ENCODE measurements at regions of chr6 and their contacts with region 1.

Region 1: GRCh38 chr6:90296346-90297114 is at the start of gene BACH2:
- DNase-seq: peak; percentile 74
- total RNA-seq, gene BACH2: 2.2 and 8.1 TPM in 2 replicates

Region 2: GRCh38 chr6:89984926-89985750 is 311.4 kb before region 1 on chr6:
- in situ Hi-C with region 1: loop called (anchors 25 kb)
- DNase-seq: no peak

Region 3: DNA sequence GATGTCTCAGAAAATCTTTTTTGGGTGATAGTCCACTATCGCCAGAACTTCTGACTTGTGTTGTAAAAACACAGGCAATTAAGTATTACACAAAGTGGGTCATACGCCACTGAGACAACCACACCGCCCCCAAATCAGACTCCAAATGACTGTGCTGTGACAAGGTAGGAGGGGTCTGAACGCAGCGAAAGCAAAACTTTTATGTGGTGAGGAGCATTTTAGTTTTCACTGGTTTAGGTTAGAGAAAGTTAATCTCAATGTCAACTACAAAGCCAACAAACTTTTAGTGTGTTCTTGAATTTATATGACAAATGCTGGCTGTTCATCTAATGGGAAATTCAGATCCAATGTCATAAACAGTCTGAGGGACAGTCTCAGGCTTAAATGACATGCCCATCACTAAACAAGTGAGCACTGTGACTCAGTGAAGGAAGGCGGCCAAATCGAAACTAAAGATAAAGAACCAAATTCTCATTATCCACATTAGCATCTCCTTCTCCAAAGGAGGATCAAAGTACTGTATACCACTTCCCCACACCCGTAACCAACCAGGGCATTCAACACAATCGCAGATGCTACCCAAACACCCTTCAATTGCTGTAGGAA is 215.6 kb before region 1 on chr6:
- in situ Hi-C with region 1: no loop called
- DNase-seq: no peak

Measured in Caki2 (cell line).